ENCODE measurements at regions of chr12 and their contacts with region 1.

Region 1: GRCh38 chr12:102454808-102455760 is 25.3 kb downstream of the IGF1 start:
- DNase-seq: peak; percentile 10
- ATAC-seq: peak; percentile 54; the same call in 1 of the 3 replicates
- H3K4me3 ChIP-seq: no peak overlapping the region
- H3K27ac ChIP-seq: no peak overlapping the region
- H3K4me1 ChIP-seq: peaks cover 11% of the 10 kb centered on the region
- H3K27me3 ChIP-seq: no peaks in the 10 kb centered on the region
- CTCF ChIP-seq: no peak
- EP300 ChIP-seq: no peak
- POLR2A ChIP-seq: no peak
- RAD21 ChIP-seq: no peak

Region 2: GRCh38 chr12:102227954-102228353 is 227.1 kb before region 1 on chr12:
- CTCF ChIA-PET with region 1: no interaction called
- POLR2A ChIA-PET with region 1: no interaction called
- in situ Hi-C with region 1: no loop called
- intact Hi-C with region 1: no loop called
- DNase-seq: no peak
- ATAC-seq: no peak
- H3K4me3 ChIP-seq: no peak overlapping the region
- H3K27ac ChIP-seq: no peak overlapping the region
- H3K4me1 ChIP-seq: no peaks in the 10 kb centered on the region; the same call in 1 of the 2 replicates
- H3K27me3 ChIP-seq: no peaks in the 10 kb centered on the region
- CTCF ChIP-seq: no peak
- EP300 ChIP-seq: no peak
- POLR2A ChIP-seq: no peak
- RAD21 ChIP-seq: no peak

Region 3: GRCh38 chr12:102439426-102440405 is 15.4 kb before region 1 on chr12:
- CTCF ChIA-PET with region 1: no interaction called
- POLR2A ChIA-PET with region 1: no interaction called
- in situ Hi-C with region 1: no loop called
- intact Hi-C with region 1: loop called (anchors 2 kb)
- DNase-seq: no peak
- ATAC-seq: no peak
- H3K4me3 ChIP-seq: no peak overlapping the region
- H3K27ac ChIP-seq: no peak overlapping the region
- H3K4me1 ChIP-seq: 0 out of 2 replicates have a peak, but pooled peaks cover 6% of the 10 kb centered on the region
- H3K27me3 ChIP-seq: no peaks in the 10 kb centered on the region
- CTCF ChIP-seq: no peak
- EP300 ChIP-seq: no peak
- POLR2A ChIP-seq: no peak
- RAD21 ChIP-seq: no peak